Heart left ventricle (tissue), 16 donors: ENCODE measurements at regions of chr9 and their contacts with region 1.

Region 1: GRCh38 chr9:29575219-29575618 is 2001.9 kb upstream of the C9orf72 start:
- DNase-seq: no peak
- ATAC-seq: no peak
- H3K4me3 ChIP-seq: no peak overlapping the region
- H3K27ac ChIP-seq: no peak overlapping the region
- H3K4me1 ChIP-seq: no peaks in the 10 kb centered on the region
- H3K27me3 ChIP-seq: no peaks in the 10 kb centered on the region
- CTCF ChIP-seq: no peak
- POLR2A ChIP-seq: no peak

Region 2: DNA sequence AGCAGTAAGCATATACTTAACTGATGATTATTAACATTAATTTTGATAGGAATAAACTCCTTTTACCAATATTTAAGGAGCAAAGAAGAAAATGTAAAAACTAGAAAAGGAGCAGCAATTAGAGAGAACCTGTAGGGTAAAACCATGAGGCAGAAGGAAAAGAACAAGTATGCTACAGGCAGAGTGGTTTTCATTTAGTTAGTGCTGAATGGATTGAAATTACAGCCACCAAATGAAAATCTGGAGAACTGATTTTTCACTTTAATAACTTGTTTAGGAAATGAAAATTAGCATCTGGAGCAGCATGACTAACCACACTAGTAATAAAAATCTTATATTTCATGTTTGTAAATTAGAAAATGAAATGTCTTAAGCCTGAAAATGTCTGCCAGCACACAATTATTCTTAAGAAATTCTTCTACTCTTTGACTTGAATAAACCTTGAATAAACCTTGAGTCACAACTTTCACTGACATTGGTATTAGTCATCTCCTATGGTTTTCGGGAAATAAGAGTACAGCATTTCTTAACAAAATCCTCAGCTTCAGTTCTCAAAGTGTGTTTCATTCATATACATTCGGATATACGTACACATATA is 497.1 kb before region 1 on chr9:
- intact Hi-C with region 1: loop called in 1 of 10 experiments (anchors 5 kb)
- DNase-seq: no peak
- ATAC-seq: no peak
- H3K4me3 ChIP-seq: no peak overlapping the region
- H3K27ac ChIP-seq: no peak overlapping the region
- H3K4me1 ChIP-seq: no peaks in the 10 kb centered on the region
- H3K27me3 ChIP-seq: no peaks in the 10 kb centered on the region
- CTCF ChIP-seq: no peak
- POLR2A ChIP-seq: no peak